ENCODE measurements at regions of chr10 and their contacts with region 1.

Region 1: DNA sequence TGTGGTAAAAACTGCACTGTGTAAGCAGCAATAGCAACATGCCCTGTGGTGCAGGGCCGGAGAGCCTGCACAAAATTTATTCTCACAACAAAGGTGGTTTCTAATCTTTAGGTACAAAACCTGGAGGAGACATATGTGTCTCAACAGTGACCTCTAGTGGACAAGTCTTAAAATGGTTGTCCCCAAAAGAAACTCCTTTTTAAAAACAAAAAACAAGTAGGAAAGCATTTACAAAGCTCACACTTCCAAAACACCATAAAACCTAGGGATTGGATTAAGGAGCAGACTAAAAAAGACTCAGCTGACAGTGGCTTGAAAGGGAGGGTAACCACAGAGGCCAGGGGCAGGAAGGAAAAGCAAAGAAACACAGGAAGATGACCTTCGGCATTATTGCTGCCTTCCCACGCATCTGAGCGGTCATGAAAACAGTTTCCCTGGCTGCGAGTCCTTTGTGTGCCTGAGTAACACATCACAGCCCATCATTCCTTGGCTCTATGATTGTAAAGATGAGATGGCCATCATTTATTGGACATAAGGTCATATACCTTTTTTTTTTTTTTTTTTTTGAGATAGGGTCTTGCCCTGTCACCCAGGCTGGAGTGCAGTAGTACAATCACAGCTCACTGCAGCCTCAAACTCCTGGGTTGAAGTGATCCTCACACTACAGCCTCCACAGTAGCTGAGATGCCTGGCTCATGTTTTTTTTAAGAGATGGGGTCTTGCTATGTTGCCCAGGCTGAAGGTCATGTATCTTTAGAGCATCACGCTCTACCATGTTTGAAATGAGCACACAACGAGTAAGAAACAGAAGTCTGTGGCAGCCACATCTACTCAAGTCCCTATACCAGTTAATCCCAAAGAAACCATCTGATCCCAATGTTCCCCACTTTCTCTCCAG is 39.5 kb downstream of the RSU1 start:
- DNase-seq: peak; percentile 74
- H3K4me3 Mint-ChIP-seq: no peak overlapping the region
- H3K27ac Mint-ChIP-seq: peak overlapping the region; percentile 62
- H3K4me1 Mint-ChIP-seq: peaks cover 22% of the 10 kb centered on the region
- H3K27me3 Mint-ChIP-seq: no peaks in the 10 kb centered on the region

Region 2: GRCh38 chr10:15901889-15902288 is 875.8 kb before region 1 on chr10:
- intact Hi-C with region 1: loop called (anchors 1 kb)
- DNase-seq: no peak
- H3K4me3 Mint-ChIP-seq: no peak overlapping the region
- H3K27ac Mint-ChIP-seq: no peak overlapping the region
- H3K4me1 Mint-ChIP-seq: no peaks in the 10 kb centered on the region
- H3K27me3 Mint-ChIP-seq: peaks cover 14% of the 10 kb centered on the region

Region 3: GRCh38 chr10:16116404-16117304 is 661.1 kb before region 1 on chr10:
- intact Hi-C with region 1: loop called (anchors 5 kb)
- DNase-seq: peak; percentile 57
- H3K4me3 Mint-ChIP-seq: no peak overlapping the region
- H3K27ac Mint-ChIP-seq: no peak overlapping the region
- H3K4me1 Mint-ChIP-seq: no peaks in the 10 kb centered on the region
- H3K27me3 Mint-ChIP-seq: no peaks in the 10 kb centered on the region

Region 4: DNA sequence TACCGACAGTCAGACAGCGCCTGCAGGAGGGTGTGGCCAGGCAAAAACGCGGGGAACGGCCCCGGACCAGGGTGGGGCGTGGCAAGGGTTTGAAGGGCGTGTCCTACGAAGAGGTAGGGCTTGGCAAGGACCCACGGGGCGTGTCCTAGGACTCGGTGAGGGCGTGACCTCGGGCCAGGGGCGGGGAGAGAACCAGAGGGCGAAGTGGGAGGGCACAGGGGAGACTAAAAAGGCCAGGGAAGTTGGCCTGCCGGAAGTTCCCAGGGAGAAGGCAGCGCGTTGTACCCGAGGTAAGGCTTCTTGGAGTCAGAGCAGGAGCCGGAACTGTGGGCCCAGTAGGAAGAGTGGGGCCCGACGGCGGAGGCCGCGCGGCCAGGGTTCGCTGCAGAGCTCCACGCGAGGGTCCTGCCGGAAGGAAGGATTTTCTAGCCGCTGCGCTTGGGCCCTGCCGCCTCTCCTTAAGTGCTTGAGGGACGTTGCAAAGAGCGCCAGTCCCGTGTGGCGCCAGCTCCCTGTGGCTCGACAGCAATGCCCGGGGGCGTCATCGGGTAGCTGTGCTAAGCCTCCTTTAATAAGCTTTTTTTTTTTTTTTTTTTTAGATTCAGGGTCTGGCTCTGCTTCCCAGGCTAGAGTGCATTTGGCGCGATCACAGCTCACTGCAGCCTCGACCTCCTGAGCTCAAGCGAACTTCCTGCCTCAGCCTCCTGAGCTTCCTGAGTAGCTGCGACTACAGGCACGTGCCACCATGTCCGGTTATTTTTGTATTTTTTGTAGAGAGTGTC is 340.8 kb before region 1 on chr10 and contains the start of gene PTER:
- intact Hi-C with region 1: loop called (anchors 1 kb)
- DNase-seq: peak; percentile 100
- H3K4me3 Mint-ChIP-seq: peak within 1 kb of the TSS; percentile 95
- H3K27ac Mint-ChIP-seq: peak within 1 kb of the TSS; percentile 96
- H3K4me1 Mint-ChIP-seq: peaks cover 37% of the 10 kb centered on the region
- H3K27me3 Mint-ChIP-seq: peaks cover 9% of the 10 kb centered on the region
- total RNA-seq, gene PTER: 16.7 and 17.8 TPM in 2 replicates

Region 5: GRCh38 chr10:16653224-16653623 is 124.5 kb before region 1 on chr10:
- intact Hi-C with region 1: loop called (anchors 5 kb)
- DNase-seq: no peak
- H3K4me3 Mint-ChIP-seq: no peak overlapping the region
- H3K27ac Mint-ChIP-seq: peak overlapping the region; percentile 17
- H3K4me1 Mint-ChIP-seq: peaks cover 11% of the 10 kb centered on the region
- H3K27me3 Mint-ChIP-seq: no peaks in the 10 kb centered on the region

Region 6: DNA sequence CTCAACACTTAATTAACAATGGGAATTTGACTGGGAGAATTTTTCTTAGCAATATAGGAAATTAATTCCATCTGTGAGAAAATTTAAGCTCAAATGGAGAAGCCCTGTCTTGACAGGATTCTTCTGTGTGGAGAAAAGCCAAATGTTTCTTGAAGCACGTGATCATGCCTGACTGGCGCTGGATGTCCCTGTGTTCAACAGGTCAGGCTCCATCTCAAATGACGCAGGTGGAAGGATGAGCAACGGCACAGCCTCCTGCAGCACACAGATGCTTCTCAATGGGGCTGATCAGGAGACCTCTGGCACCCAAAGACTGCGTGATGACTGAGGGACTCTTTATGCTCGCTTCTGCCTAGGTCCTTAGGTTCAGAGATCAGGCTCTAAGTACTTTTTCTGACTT is 104.3 kb before region 1 on chr10:
- intact Hi-C with region 1: no loop called
- DNase-seq: no peak
- H3K4me3 Mint-ChIP-seq: no peak overlapping the region
- H3K27ac Mint-ChIP-seq: no peak overlapping the region
- H3K4me1 Mint-ChIP-seq: peaks cover 2% of the 10 kb centered on the region
- H3K27me3 Mint-ChIP-seq: no peaks in the 10 kb centered on the region

Region 7: GRCh38 chr10:16933783-16934182 is 156.1 kb after region 1 on chr10:
- intact Hi-C with region 1: no loop called
- DNase-seq: no peak
- H3K4me3 Mint-ChIP-seq: no peak overlapping the region
- H3K27ac Mint-ChIP-seq: no peak overlapping the region
- H3K4me1 Mint-ChIP-seq: no peaks in the 10 kb centered on the region
- H3K27me3 Mint-ChIP-seq: peaks cover 7% of the 10 kb centered on the region

Measured in activated CD4-positive, alpha-beta T cell treated with anti-CD3 and anti-CD28 coated beads, Interleukin-2, amount 10 ng/mL, durations not matched to agents 24 days and 14 days (primary cell).